GM18951 (cell line): ENCODE measurements at regions of chr15 and their contacts with region 1.

Region 1: DNA sequence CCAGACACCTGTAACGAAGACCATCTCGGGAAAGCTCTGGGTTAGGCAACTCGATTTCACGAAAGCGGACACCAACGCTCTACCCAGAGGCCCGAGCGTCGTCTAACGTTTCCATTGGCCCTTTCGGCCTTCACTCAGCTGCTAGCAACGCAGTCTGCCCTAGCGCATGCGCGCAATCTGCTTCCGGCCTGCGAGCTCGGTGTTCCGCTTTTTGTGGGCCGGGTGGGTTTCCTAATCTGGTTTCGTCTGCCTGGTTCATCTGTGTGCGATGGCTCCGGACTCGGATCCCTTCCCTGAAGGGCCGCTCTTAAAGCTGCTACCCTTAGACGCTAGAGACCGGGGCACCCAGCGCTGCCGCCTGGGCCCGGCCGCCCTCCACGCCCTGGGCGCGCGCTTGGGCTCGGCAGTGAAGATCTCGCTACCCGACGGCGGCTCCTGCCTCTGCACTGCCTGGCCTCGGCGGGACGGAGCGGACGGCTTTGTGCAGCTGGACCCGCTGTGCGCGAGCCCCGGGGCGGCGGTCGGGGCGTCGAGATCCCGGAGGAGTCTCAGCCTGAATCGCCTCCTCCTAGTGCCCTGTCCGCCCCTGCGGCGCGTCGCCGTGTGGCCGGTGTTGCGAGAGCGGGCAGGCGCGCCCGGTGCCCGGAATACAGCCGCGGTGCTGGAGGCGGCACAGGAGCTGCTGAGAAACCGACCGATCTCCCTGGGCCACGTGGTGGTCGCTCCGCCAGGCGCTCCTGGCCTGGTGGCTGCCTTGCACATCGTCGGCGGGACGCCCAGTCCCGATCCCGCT is 24.0 kb upstream of the GATM start:
- POLR2A ChIP-seq: peak; percentile 94

Region 2: GRCh38 chr15:45200001-45200798 is 202.2 kb before region 1 on chr15:
- in situ Hi-C with region 1: loop called (anchors 10 kb)
- POLR2A ChIP-seq: peak; percentile 67